Mammary epithelial cell (primary cell): ENCODE measurements at regions of chr18 and their contacts with region 1.

Region 1: DNA sequence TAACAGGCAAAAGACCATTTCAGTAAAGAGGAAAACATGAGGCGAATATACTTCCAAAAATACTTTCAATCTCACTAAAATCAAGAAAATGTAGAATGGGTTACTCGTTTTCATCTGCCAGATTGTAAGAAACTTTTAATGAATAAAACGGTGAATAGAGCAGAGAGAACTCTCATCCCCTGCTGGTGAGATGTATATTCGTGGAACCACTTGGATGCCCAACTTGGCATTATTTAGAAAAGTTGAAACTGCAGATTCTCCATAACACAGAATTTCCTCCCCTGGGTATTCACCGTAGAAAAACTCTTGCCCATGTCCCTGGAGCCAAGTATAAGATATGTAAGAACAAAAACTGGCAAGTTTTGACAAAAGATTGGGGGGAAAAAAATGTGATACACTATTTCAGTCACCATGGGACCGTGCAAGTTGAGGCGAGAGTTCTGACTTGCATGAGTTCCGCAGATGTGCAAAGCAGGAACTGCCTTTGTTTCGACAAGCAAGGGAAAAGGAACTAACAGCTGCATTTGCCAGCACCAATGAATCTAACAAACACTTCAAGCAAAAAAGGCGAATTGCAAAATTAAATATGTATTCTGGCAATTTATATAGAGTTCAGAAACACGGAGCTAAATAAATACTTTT is 14.8 kb downstream of the TIMM21 start:
- DNase-seq: peak; percentile 82
- H3K4me3 ChIP-seq: no peak overlapping the region
- H3K27ac ChIP-seq: peak overlapping the region; percentile 49
- H3K4me1 ChIP-seq: peaks cover 18% of the 10 kb centered on the region
- H3K27me3 ChIP-seq: no peaks in the 10 kb centered on the region
- CTCF ChIP-seq: peak; percentile 33 to 45

Region 2: GRCh38 chr18:73717573-73717972 is 445.6 kb before region 1 on chr18:
- CTCF ChIA-PET with region 1: no interaction called
- dilution Hi-C with region 1: no loop called
- in situ Hi-C with region 1: no loop called
- intact Hi-C with region 1: no loop called
- DNase-seq: no peak
- H3K4me3 ChIP-seq: no peak overlapping the region
- H3K27ac ChIP-seq: peak overlapping the region; percentile 25
- H3K4me1 ChIP-seq: peaks cover 8% of the 10 kb centered on the region
- H3K27me3 ChIP-seq: no peaks in the 10 kb centered on the region
- CTCF ChIP-seq: no peak

Region 3: GRCh38 chr18:74069178-74070055 is 93.7 kb before region 1 on chr18:
- CTCF ChIA-PET with region 1: no interaction called
- dilution Hi-C with region 1: loop called (anchors 5 kb)
- in situ Hi-C with region 1: no loop called
- intact Hi-C with region 1: no loop called
- DNase-seq: no peak
- H3K4me3 ChIP-seq: no peak overlapping the region
- H3K27ac ChIP-seq: no peak overlapping the region
- H3K4me1 ChIP-seq: no peaks in the 10 kb centered on the region
- H3K27me3 ChIP-seq: no peaks in the 10 kb centered on the region
- CTCF ChIP-seq: no peak

Region 4: DNA sequence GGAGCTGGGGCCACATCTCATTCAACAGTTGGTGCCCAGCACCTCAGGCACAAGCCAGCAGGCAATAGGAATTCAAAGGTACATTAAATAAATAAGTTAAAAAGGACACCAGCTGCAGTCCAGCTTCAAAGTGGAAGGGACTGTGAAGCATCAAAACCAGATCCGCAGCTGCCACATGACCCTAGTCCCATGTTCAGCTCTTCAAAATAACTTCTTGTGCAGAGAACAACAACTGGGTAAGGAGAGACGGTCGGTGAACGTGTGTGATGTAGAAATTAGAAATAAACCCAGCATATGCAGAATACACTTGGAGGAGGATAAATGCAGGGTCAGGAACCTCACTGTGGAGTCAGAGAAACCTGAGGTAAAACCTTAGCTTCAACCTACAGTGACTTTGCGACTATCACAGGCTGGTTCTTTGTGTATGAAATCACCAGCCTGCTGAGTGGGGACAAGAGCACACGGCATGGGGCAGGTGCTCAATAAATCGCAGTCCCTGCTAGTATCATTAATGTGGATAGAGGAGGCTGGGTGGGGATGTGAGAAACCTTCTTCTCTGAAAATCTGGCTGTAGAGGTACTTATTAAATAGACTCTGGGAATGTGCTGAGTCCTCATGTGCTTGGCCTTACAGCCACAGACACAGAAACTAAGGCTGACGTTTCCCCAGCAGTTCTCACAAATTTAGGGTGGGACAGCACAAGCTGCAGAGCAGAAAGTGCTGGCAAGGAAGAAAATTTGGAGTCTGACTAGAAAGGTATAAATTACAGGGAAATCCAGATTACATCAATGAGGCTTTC is 36.3 kb before region 1 on chr18:
- CTCF ChIA-PET with region 1: no interaction called
- dilution Hi-C with region 1: no loop called
- in situ Hi-C with region 1: no loop called
- intact Hi-C with region 1: no loop called
- DNase-seq: no peak
- H3K4me3 ChIP-seq: no peak overlapping the region
- H3K27ac ChIP-seq: no peak overlapping the region
- H3K4me1 ChIP-seq: no peaks in the 10 kb centered on the region
- H3K27me3 ChIP-seq: no peaks in the 10 kb centered on the region
- CTCF ChIP-seq: no peak

Region 5: GRCh38 chr18:74217476-74218143 is 54.5 kb after region 1 on chr18:
- CTCF ChIA-PET with region 1: no interaction called
- dilution Hi-C with region 1: no loop called
- in situ Hi-C with region 1: no loop called
- intact Hi-C with region 1: no loop called
- DNase-seq: no peak
- H3K4me3 ChIP-seq: no peak overlapping the region
- H3K27ac ChIP-seq: no peak overlapping the region
- H3K4me1 ChIP-seq: no peaks in the 10 kb centered on the region
- H3K27me3 ChIP-seq: no peaks in the 10 kb centered on the region
- CTCF ChIP-seq: no peak

Region 6: GRCh38 chr18:74869904-74870863 is 707.0 kb after region 1 on chr18:
- CTCF ChIA-PET with region 1: no interaction called
- dilution Hi-C with region 1: no loop called
- in situ Hi-C with region 1: no loop called
- intact Hi-C with region 1: no loop called
- DNase-seq: no peak
- H3K4me3 ChIP-seq: no peak overlapping the region
- H3K27ac ChIP-seq: no peak overlapping the region
- H3K4me1 ChIP-seq: peaks cover 2% of the 10 kb centered on the region
- H3K27me3 ChIP-seq: no peaks in the 10 kb centered on the region
- CTCF ChIP-seq: no peak